Breast epithelium (tissue), 4 donors: ENCODE measurements at regions of chrX and their contacts with region 1.

Region 1: GRCh38 chrX:39367416-39367815 is 566.2 kb downstream of the MID1IP1 start:
- DNase-seq: no peak
- H3K4me3 ChIP-seq: no peak overlapping the region
- H3K27ac ChIP-seq: no peak overlapping the region
- H3K4me1 ChIP-seq: no peaks in the 10 kb centered on the region
- H3K27me3 ChIP-seq: peaks cover 0 to 65% of the 10 kb centered on the region in 2 donors
- CTCF ChIP-seq: no peak
- POLR2A ChIP-seq: no peak

Region 2: DNA sequence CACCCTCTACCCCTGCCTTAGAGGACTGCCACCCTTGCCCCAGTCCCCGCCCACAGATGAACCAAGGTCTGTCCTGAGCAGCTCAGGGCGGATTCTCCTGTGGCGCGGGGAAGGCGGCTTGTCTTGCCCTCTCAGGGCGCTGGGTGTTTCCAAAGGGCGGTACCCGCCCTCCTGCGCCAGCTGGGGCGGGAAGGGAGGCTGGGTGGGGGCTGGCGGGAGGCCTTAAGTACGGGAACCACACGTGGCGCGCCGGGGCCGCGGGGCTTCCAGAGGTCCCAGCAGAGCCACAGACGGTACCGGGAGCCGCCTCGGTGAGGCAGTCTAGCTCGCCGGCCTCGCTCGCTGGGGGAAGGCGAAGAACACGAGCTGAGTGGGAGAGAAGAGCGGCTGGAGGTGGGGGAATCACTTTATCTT is 205.1 kb before region 1 on chrX:
- intact Hi-C with region 1: loop called (anchors 5 kb)
- DNase-seq: no peak
- H3K4me3 ChIP-seq: peak overlapping the region in 1 of 3 donors; percentile 45
- H3K27ac ChIP-seq: no peak overlapping the region
- H3K4me1 ChIP-seq: no peaks in the 10 kb centered on the region
- H3K27me3 ChIP-seq: peaks cover 0 to 81% of the 10 kb centered on the region in 2 donors
- CTCF ChIP-seq: no peak
- POLR2A ChIP-seq: no peak

Region 3: DNA sequence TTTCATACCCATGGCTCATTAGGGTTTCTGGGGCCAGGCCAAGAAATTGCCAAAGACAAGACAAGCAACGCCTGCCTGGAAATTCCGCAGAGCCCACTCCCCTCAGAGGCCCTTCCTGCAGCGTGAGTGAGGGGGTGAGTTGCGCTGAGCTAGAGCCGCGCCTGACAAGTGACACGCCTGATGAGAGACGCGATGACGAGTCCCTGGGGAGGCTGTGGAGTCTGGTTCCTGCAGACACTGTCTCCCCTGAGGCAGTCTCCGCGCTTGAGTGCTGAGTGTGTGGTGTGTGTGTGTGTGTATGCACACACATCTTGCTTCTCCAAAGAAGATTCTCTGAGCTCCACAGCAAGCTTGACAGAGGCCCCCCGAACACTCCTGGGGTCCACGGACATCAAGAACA is 460.5 kb after region 1 on chrX:
- intact Hi-C with region 1: no loop called
- DNase-seq: no peak
- H3K4me3 ChIP-seq: no peak overlapping the region
- H3K27ac ChIP-seq: no peak overlapping the region
- H3K4me1 ChIP-seq: no peaks in the 10 kb centered on the region
- H3K27me3 ChIP-seq: peaks cover 0 to 48% of the 10 kb centered on the region in 2 donors
- CTCF ChIP-seq: no peak
- POLR2A ChIP-seq: no peak